ENCODE measurements at regions of chr10 and their contacts with region 1.

Region 1: DNA sequence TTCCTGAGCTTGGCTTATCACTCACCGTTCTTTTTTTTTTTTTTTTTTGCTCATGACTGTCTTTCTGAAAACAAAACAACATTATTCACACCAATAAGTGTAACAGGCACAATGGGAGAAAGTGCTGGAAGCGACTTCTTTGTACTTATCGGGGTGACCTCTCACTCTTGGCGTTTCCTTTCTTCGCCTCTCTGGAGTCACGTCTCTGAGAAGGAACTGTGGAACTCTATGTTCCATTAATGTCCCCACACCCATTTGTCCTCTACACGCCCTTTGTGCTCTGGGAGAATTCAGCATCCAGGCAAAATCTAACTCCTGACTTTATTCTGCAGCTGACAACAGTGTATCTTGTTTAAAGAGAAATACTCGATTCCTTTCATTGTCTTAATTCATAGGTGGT is 70.8 kb upstream of the FAM204A start:
- DNase-seq: no peak
- ATAC-seq: no peak
- H3K4me3 ChIP-seq: no peak overlapping the region
- H3K27ac ChIP-seq: no peak overlapping the region
- H3K4me1 ChIP-seq: no peaks in the 10 kb centered on the region
- H3K27me3 ChIP-seq: peaks cover 3 to 11% of the 10 kb centered on the region in 2 experiments; a peak in 3 of 5 replicates
- CTCF ChIP-seq: no peak
- EP300 ChIP-seq: no peak
- POLR2A ChIP-seq: no peak
- RAD21 ChIP-seq: no peak

Region 2: DNA sequence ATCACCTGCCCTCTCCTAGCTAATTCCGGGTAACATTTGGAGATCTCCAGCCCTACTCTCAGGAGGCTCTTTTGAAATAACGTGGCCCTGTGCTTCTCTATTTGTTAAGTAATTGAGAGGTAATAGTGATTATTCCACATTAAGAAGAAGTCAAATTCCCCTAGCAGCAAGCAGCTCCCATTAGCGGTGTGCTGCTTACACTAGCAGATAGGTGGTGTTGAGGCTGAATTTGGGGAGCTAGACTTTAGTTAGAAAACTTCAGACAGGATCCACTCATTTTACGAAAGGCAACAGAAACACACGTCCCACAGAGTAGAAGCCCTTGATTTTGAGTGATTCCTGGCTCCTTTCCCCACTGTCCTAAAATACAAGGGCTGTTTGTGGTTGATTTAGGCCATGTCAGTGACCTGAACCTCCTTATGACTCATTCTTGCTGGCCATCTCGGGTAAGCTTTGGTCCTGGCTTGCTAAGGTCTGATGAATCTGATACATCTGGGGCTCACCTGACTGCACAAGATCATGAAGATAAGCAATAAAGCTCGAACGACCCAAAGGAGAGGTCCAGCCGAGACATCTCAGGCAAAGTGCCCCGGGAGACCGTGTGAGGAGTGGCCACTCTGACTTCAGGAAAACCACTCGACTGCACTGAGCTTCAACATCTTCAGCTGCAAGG is 148.0 kb before region 1 on chr10:
- CTCF ChIA-PET with region 1: no interaction called
- POLR2A ChIA-PET with region 1: no interaction called
- in situ Hi-C with region 1: no loop called
- intact Hi-C with region 1: loop called (anchors 10 kb)
- DNase-seq: no peak
- ATAC-seq: no peak
- H3K4me3 ChIP-seq: no peak overlapping the region
- H3K27ac ChIP-seq: no peak overlapping the region
- H3K4me1 ChIP-seq: no peaks in the 10 kb centered on the region
- H3K27me3 ChIP-seq: peaks cover 0 to 10% of the 10 kb centered on the region in 2 experiments; a peak in 4 of 5 replicates
- CTCF ChIP-seq: no peak
- EP300 ChIP-seq: no peak
- POLR2A ChIP-seq: no peak
- RAD21 ChIP-seq: no peak

Measured in K562 (cell line).